Activated CD4-positive, alpha-beta T cell treated with anti-CD3 and anti-CD28 coated beads for 36 hours (primary cell): ENCODE measurements at regions of chr9 and their contacts with region 1.

Region 1: GRCh38 chr9:33473643-33474352 is at the start of gene NOL6:
- DNase-seq: peak; percentile 98
- ATAC-seq: peak; percentile 100
- H3K4me3 Mint-ChIP-seq: peak within 1 kb of the TSS; percentile 100
- H3K27ac Mint-ChIP-seq: peak within 1 kb of the TSS; percentile 95
- H3K4me1 Mint-ChIP-seq: peaks cover 22% of the 10 kb centered on the region
- H3K27me3 Mint-ChIP-seq: no peaks in the 10 kb centered on the region
- total RNA-seq, gene NOL6: 39.0 to 39.4 TPM

Region 2: GRCh38 chr9:33024966-33025571 is 448.7 kb before region 1 on chr9 and contains the start of gene DNAJA1:
- CTCF ChIA-PET with region 1: no interaction called
- POLR2A ChIA-PET with region 1: interaction called, 6 read pairs
- intact Hi-C with region 1: loop called in 1 of 2 experiments (anchors 1 kb)
- DNase-seq: peak; percentile 97
- ATAC-seq: peak; percentile 82
- H3K4me3 Mint-ChIP-seq: peak within 1 kb of the TSS; percentile 98
- H3K27ac Mint-ChIP-seq: peak within 1 kb of the TSS; percentile 94
- H3K4me1 Mint-ChIP-seq: peaks cover 59% of the 10 kb centered on the region
- H3K27me3 Mint-ChIP-seq: no peaks in the 10 kb centered on the region
- total RNA-seq, gene DNAJA1: 198 to 266 TPM

Region 3: GRCh38 chr9:33264473-33265177 is 209.2 kb before region 1 on chr9 and contains the starts of genes BAG1 and CHMP5:
- CTCF ChIA-PET with region 1: no interaction called
- POLR2A ChIA-PET with region 1: no interaction called
- intact Hi-C with region 1: loop called (anchors 1 kb)
- DNase-seq: peak; percentile 100
- ATAC-seq: peak; percentile 96
- H3K4me3 Mint-ChIP-seq: peak within 1 kb of the TSS; percentile 97
- H3K27ac Mint-ChIP-seq: peak within 1 kb of the TSS; percentile 99
- H3K4me1 Mint-ChIP-seq: peaks cover 51% of the 10 kb centered on the region
- H3K27me3 Mint-ChIP-seq: no peaks in the 10 kb centered on the region
- total RNA-seq, gene BAG1: 47.9 to 65.8 TPM
- total RNA-seq, gene CHMP5: 102 to 106 TPM

Region 4: GRCh38 chr9:33404788-33405362 is 68.9 kb before region 1 on chr9:
- CTCF ChIA-PET with region 1: interaction called, 14 read pairs
- POLR2A ChIA-PET with region 1: no interaction called
- intact Hi-C with region 1: no loop called
- DNase-seq: no peak
- ATAC-seq: no peak
- H3K4me3 Mint-ChIP-seq: no peak overlapping the region
- H3K27ac Mint-ChIP-seq: no peak overlapping the region
- H3K4me1 Mint-ChIP-seq: peaks cover 3% of the 10 kb centered on the region
- H3K27me3 Mint-ChIP-seq: no peaks in the 10 kb centered on the region

Region 5: DNA sequence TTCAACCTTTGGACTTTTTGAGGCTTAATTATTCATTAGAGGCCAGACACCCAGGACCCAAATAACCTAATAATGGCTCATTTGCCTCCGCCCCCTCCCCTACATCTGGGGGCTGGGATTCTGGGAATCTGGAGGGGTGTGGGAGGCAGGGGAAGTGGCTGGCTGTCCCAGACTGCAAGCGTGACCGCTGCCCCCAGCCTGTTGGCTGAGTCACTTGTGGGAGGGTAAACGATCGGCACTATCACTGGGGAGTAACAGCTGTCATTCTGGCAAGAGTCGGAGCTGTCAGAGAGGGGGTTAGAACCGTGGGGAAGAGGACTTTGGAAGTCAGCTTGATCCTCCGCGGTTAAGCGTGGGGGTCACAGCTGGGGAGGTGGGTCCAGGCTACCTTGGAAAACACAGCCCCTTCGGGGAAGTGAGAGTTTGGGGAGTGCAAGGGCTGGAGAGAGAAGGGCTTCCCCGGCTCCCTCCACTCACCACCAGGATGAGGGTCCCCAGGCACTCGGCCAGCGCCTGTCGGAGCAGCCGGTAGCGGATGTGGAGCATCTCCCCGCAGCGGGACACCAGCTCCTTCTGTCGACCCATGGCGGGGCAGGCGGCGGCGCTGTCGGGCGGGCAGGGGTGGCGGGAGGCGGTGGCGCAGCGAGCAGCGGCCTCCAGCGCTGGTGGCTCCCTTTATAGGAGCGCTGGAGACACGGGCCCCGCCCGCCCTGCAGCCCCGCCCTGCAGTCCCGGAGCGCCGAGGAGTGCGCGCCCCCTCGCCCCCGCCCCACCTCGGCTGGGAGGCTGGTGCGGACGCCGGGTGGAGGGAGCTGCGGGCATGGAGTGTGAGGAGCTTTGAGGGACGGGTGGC is 26.6 kb before region 1 on chr9 and contains the start of gene AQP3:
- CTCF ChIA-PET with region 1: interaction called, 25 read pairs
- POLR2A ChIA-PET with region 1: interaction called, 10 read pairs
- intact Hi-C with region 1: loop called (anchors 1 to 2 kb)
- DNase-seq: peak; percentile 85
- ATAC-seq: peak; percentile 68
- H3K4me3 Mint-ChIP-seq: peak within 1 kb of the TSS; percentile 79
- H3K27ac Mint-ChIP-seq: peak within 1 kb of the TSS; percentile 93
- H3K4me1 Mint-ChIP-seq: peaks cover 43% of the 10 kb centered on the region
- H3K27me3 Mint-ChIP-seq: no peaks in the 10 kb centered on the region
- total RNA-seq, gene AQP3: 8.5 to 11.3 TPM

Region 6: GRCh38 chr9:34178520-34179212 is 704.9 kb after region 1 on chr9 and contains the start of gene UBAP1:
- CTCF ChIA-PET with region 1: no interaction called
- POLR2A ChIA-PET with region 1: no interaction called
- intact Hi-C with region 1: loop called in 1 of 2 experiments (anchors 10 kb)
- DNase-seq: peak; percentile 98
- ATAC-seq: peak; percentile 97
- H3K4me3 Mint-ChIP-seq: peak within 1 kb of the TSS; percentile 93
- H3K27ac Mint-ChIP-seq: peak within 1 kb of the TSS; percentile 96
- H3K4me1 Mint-ChIP-seq: peaks cover 20% of the 10 kb centered on the region
- H3K27me3 Mint-ChIP-seq: no peaks in the 10 kb centered on the region
- total RNA-seq, gene UBAP1: 29.5 to 43.3 TPM

Region 7: DNA sequence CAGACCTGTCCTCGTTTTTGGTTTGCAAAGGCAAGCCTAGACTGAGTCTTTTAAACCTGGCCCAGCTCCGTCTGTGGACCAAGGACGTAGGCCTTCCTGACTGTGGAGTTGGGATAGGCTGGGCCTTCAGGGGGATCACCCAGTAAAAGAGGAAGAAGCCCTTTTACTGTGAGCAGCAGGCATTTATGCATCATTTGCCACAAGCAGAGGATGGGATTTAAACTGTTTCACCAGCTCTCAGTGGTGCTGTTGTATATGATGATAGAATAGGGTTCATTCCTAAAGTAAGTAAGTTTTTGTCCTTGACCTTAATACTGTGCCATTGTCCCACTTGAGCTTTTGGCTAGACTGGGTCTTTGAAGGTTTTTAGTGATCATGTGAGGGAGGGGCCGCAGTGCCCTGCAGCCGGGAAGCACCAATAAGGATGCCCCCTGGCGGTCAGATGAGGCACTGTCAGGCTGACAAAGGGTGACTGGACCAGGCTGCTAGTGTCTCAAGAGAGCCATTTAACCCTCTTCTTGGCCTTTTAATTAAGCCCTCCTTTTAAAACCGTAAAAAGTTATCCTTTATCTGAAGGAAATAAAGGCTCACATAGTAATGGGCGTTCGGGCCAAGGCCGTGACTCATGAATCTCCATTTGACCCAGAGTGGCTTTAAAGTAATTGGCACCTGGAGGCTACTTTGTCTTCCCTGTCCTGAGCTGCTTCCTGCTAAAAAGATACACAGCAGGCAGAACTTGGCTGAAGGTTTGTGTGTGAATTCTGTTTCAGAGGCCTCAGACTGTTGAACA is 779.1 kb after region 1 on chr9:
- CTCF ChIA-PET with region 1: no interaction called
- POLR2A ChIA-PET with region 1: no interaction called
- intact Hi-C with region 1: no loop called
- DNase-seq: peak; percentile 82
- ATAC-seq: peak; percentile 84
- H3K4me3 Mint-ChIP-seq: no peak overlapping the region
- H3K27ac Mint-ChIP-seq: peak overlapping the region; percentile 8
- H3K4me1 Mint-ChIP-seq: peaks cover 21% of the 10 kb centered on the region
- H3K27me3 Mint-ChIP-seq: no peaks in the 10 kb centered on the region

Region 8: DNA sequence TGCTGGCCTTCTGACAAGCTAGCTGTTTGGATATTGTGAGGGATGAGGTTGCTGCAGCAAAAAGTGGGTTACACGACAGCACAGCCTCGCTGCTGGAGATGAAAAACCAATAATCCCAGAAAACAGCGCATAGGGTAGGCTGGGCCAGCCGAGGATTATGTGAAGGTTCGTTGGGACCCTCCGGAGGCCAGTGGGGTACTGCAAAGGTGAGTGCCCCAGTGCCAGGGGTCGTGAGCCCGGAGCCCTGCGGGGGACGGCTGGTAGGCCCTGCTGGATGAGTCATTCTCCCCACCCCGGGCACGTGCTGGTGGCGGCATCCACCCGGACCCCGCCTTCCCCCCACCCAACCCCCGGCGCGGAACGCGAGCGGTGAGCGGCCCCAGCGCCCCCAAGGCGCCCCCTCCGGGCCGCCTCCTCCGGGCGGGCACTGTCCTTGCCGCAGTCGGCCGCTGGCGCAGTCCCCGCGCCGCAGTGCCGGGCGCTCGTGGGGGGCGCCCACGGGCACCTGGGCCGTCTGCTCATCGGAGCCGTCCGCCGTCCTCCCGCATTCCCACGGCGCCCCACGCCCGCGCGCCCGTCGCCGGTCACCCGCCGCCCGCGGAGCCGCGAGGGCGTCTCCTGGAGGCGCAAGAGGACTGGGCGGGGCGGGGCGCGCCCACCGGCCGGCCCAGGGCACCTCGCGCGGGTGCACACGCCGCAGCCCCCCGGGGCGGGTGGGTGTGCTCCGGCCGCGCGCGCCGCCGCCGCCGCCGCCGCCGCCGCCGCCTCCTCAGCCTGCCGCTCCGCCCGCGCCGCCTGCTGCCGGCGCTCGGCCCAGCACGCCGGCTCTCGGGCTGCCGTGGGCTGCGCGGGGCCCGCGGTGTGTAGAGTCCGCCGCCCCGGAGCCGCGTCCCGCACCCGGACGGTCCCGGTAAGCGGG is 1484.0 kb after region 1 on chr9 and contains the start of gene PHF24:
- CTCF ChIA-PET with region 1: no interaction called
- POLR2A ChIA-PET with region 1: no interaction called
- intact Hi-C with region 1: no loop called
- DNase-seq: peak; percentile 46
- ATAC-seq: peak; percentile 49
- H3K4me3 Mint-ChIP-seq: peak within 1 kb of the TSS; percentile 32
- H3K27ac Mint-ChIP-seq: no peak within 1 kb of the TSS
- H3K4me1 Mint-ChIP-seq: peaks cover 24% of the 10 kb centered on the region
- H3K27me3 Mint-ChIP-seq: peaks cover 51% of the 10 kb centered on the region
- total RNA-seq, gene PHF24: 0.09 to 0.18 TPM